ENCODE measurements at regions of chr1 and their contacts with region 1.

Region 1: DNA sequence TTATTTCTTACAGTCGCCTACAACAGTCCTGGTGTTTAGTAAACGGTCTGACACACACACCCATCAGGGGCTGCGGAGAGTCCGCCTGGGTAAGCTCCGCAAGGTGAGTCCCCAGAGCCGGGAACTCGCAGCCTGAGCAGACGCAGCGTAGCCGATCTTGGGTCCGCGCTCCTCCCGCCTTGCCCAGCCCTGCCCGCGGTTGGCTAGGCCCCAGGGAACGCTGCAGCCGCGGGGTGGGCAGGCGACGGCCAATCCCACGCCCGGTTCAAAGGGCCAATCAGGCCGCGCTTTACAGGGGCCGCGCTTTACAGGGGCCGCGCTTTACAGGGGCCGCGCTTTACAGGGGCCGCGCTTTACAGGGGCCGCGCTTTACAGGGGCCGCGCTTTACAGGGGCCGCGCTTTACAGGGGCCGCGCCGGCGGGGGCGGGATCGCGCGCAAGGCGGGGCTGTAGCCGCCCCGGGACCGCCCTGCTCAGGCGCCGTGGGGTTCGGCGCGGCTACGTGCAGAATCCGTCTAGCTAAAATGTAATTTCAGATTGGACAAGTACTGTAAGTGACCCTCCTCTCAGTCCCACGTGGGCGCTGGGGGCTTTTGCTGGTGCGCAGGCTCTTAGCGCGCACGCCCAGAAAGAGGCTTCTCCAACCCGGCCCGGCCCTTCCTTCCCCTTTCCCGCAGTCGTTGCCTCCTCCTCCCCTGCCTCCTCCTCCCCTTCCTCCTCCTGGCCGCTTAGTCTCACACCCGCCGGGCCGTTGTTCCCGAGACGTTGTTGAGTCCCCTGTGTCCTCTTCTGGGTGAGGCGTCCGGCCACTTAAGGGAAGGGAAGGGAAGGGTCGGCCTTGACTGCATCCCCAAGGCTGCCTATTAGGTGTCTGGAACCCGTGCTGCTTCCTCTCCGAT is at the start of gene FGGY:
- DNase-seq: peak; percentile 97
- ATAC-seq: peak; percentile 90
- H3K4me3 ChIP-seq: peak within 1 kb of the TSS; percentile 88
- H3K27ac ChIP-seq: peak within 1 kb of the TSS; percentile 76
- H3K4me1 ChIP-seq: peaks cover 30% of the 10 kb centered on the region
- H3K27me3 ChIP-seq: no peaks in the 10 kb centered on the region
- CTCF ChIP-seq: no peak
- total RNA-seq, gene FGGY: 7.4 and 10.1 TPM in 2 replicates

Region 2: GRCh38 chr1:59041646-59042277 is 254.8 kb before region 1 on chr1:
- CTCF ChIA-PET with region 1: no interaction called
- POLR2A ChIA-PET with region 1: no interaction called
- intact Hi-C with region 1: no loop called
- DNase-seq: no peak
- ATAC-seq: no peak
- H3K4me3 ChIP-seq: no peak overlapping the region
- H3K27ac ChIP-seq: no peak overlapping the region
- H3K4me1 ChIP-seq: peaks cover 17% of the 10 kb centered on the region
- H3K27me3 ChIP-seq: no peaks in the 10 kb centered on the region
- CTCF ChIP-seq: no peak

Region 3: DNA sequence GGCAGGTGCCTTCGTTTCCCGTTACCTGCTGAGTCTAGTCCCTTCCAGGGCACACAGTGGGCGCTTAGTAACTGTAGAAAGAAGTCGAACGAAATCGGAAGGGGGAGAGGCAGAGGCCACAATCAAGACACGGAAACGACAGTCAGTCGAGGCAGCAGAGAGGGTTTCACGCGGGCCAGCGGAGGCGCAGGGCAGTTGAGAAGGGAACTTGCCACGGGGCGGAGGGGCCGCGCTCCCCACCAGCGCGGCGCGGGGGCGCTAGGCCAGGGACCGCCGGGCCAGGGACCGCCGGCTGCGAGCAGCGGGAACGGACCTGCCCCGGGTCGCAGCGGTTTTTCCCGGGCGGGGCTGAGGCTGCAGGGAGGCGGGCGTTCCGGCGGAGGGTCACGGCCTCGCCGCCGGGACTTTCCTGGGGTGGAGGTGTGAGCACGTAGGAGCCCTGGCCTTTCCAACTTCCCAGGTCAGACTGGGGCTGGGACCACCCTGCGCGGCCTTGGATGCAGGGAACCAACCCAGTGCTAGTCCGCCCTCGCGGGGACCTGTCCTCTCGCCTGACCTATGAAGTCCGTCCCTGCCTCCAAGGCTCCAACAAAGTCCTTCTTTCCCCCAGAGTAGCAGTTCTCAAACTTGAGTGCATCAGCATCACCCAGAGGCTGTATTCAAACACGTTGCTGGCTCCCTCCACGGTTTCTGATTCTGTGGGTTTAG is 149.8 kb before region 1 on chr1:
- CTCF ChIA-PET with region 1: no interaction called
- POLR2A ChIA-PET with region 1: no interaction called
- intact Hi-C with region 1: loop called (anchors 5 kb)
- DNase-seq: peak; percentile 46
- ATAC-seq: peak; percentile 11
- H3K4me3 ChIP-seq: peak overlapping the region; percentile 68
- H3K27ac ChIP-seq: peak overlapping the region; percentile 31
- H3K4me1 ChIP-seq: peaks cover 61% of the 10 kb centered on the region
- H3K27me3 ChIP-seq: no peaks in the 10 kb centered on the region
- CTCF ChIP-seq: no peak

Region 4: DNA sequence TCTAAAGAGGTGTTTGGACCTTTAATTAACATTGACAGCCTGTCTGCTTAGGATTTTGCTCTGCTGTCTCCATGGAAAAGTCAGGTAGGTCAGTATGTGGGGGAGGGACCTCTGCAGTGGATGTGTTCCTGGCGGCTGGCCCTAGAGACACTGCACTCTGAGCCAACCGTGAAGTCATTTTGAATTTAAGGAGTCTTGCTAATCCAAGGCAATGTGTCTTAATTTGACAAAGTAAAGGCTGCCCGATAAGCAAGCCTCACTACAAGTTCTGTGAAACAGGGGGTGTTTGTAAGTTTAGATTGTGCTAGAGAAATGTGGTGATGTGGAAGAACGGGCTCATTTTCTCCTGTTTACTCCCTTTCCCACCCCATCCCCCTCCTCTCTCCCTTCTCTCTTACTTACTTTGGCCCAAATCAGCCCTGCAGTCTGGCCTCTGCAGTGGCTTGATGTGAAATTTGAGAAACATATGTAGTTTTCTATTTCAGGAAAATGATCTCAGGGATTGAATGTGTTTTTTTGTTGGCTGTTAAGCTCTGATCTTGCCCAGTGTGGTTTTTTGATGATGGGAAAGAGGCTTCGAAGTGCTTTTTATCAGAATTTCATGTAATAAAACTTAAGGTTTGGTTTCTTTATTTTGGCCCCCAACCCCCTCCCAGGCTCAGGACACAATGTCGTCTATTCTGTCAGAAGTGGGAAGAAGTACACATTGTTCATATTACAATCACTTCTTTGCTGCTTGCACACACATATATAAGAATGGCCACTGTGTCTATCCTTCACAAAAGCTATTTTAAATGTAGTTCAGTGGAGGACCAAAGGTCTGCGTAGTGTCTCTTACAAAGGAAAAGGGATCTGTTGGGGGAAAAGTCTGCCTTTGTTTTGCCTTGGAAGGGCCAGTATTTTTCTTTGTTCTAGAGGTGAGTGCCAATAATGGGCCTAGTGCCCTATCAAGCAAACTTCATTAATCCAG is 96.9 kb after region 1 on chr1:
- CTCF ChIA-PET with region 1: no interaction called
- POLR2A ChIA-PET with region 1: no interaction called
- intact Hi-C with region 1: no loop called
- DNase-seq: no peak
- ATAC-seq: no peak
- H3K4me3 ChIP-seq: no peak overlapping the region
- H3K27ac ChIP-seq: no peak overlapping the region
- H3K4me1 ChIP-seq: no peaks in the 10 kb centered on the region
- H3K27me3 ChIP-seq: no peaks in the 10 kb centered on the region
- CTCF ChIP-seq: no peak

Region 5: DNA sequence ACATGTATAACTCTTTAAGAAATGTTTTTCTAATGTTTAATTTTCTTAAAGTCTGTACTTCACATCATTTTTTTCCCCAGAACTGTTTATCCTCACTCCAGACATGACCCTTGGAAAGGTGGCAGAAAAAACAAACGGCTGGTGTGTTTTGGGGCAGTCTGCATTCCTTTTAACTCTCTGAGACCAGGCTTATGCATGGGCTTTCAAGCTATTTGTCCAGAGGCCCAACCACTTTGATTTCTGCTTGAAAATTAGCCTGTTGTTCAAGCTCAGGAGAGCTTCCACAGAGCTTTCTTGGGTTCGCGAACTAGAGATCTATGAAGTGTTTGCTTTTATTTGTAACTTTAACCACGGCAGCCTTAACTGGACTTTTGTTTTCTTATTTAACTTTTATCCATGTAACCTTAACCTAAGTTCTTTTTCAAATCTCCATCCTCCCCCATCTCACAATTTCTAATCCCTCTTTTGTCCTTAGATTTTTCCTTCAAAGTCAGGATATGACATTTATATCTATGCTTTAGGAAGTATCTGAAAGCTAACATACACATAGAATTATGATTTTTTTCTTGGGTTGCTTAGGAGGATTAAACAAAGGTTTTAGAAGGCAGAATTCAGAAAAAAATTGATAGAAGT is 112.1 kb after region 1 on chr1:
- CTCF ChIA-PET with region 1: no interaction called
- POLR2A ChIA-PET with region 1: no interaction called
- intact Hi-C with region 1: no loop called
- DNase-seq: no peak
- ATAC-seq: no peak
- H3K4me3 ChIP-seq: no peak overlapping the region
- H3K27ac ChIP-seq: no peak overlapping the region
- H3K4me1 ChIP-seq: no peaks in the 10 kb centered on the region
- H3K27me3 ChIP-seq: no peaks in the 10 kb centered on the region
- CTCF ChIP-seq: no peak

Region 6: DNA sequence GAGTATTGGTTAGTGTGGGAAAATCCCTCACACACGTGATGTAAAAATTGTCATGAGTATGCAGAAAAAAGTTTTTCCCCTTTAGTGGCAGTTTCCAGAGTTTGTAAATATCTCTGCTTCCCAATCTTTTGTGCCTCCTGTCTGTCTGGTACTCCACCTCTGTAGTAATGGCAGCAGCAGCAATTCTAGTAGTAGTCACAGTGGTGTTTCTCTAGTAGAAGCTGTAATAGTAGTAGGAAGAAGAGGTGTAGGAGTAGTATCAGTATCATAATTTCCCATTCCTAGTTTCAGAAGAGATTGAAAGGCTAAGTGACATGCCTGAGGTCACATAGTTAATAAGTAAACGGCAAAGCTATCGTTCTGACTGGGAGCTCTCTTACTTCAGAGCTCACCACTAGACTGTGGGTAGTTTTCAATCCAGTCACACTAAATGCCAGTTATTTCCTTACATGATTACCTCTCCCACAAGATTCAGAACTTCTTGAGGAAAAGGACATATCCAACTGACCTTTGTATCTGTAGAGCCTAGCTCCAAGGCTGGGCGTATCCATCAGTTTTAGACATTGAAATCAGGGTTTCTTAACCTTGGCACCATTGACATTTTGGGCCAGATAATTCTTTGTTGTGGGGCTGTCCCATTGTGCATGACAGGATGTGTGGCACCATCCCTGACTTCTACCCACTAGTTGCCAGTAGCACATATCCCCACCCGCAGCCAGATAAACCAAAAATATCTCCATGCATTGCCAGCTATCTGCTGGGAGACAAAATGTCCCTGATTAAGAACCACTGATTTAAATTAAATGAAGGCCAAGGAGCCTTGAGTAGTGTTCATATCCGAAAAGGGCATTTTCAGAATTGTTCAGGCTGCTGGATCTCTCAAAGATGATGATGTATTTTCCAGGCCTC is 136.2 kb after region 1 on chr1:
- CTCF ChIA-PET with region 1: no interaction called
- POLR2A ChIA-PET with region 1: no interaction called
- intact Hi-C with region 1: loop called (anchors 2 kb)
- DNase-seq: no peak
- ATAC-seq: no peak
- H3K4me3 ChIP-seq: no peak overlapping the region
- H3K27ac ChIP-seq: peak overlapping the region; percentile 84
- H3K4me1 ChIP-seq: peaks cover 54% of the 10 kb centered on the region
- H3K27me3 ChIP-seq: no peaks in the 10 kb centered on the region
- CTCF ChIP-seq: no peak

Region 7: GRCh38 chr1:59506952-59507351 is 210.3 kb after region 1 on chr1:
- CTCF ChIA-PET with region 1: no interaction called
- POLR2A ChIA-PET with region 1: no interaction called
- intact Hi-C with region 1: loop called (anchors 2 kb)
- DNase-seq: peak; percentile 64
- ATAC-seq: peak; percentile 94
- H3K4me3 ChIP-seq: 0 out of 2 replicates have a peak overlapping the region, but pooled peaks have one; percentile 3
- H3K27ac ChIP-seq: peak overlapping the region; percentile 52
- H3K4me1 ChIP-seq: peaks cover 19% of the 10 kb centered on the region
- H3K27me3 ChIP-seq: no peaks in the 10 kb centered on the region
- CTCF ChIP-seq: no peak

Region 8: DNA sequence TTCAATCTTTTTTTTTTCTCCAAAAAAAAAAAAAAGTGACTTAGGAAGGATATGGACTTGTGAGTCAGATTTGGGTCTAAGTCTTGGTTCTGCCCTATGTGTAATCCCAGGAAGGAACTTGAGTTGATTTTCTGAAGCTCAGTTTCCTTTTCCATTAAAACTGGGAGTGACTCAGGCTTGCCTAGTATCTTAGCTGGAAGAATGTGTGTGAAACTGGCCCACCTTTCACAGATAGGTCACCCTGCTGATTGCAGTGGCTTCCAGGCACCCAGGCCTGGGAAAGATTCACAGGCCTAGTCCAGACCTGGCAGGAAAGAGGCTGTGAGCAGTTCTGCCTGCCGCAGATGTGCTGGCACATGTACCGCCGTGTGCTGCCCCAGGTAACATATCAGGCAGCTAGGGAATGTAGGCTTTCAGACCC is 299.8 kb after region 1 on chr1:
- CTCF ChIA-PET with region 1: no interaction called
- POLR2A ChIA-PET with region 1: no interaction called
- intact Hi-C with region 1: loop called (anchors 1 kb)
- DNase-seq: peak; percentile 85
- ATAC-seq: peak; percentile 84
- H3K4me3 ChIP-seq: no peak overlapping the region
- H3K27ac ChIP-seq: peak overlapping the region; percentile 94
- H3K4me1 ChIP-seq: peaks cover 25% of the 10 kb centered on the region
- H3K27me3 ChIP-seq: no peaks in the 10 kb centered on the region
- CTCF ChIP-seq: no peak